Activated CD8-positive, alpha-beta T cell treated with anti-CD3 and anti-CD28 coated beads for 36 hours (primary cell): ENCODE measurements at regions of chr20 and their contacts with region 1.

Region 1: GRCh38 chr20:62010551-62011402 is 54.9 kb downstream of the TAF4 start:
- DNase-seq: peak; percentile 73
- ATAC-seq: peak; percentile 83
- H3K4me3 Mint-ChIP-seq: no peak overlapping the region
- H3K27ac Mint-ChIP-seq: no peak overlapping the region
- H3K4me1 Mint-ChIP-seq: peaks cover 9% of the 10 kb centered on the region
- H3K27me3 Mint-ChIP-seq: no peaks in the 10 kb centered on the region
- CTCF ChIP-seq: peak; percentile 88

Region 2: GRCh38 chr20:61861054-61861841 is 149.5 kb before region 1 on chr20:
- CTCF ChIA-PET with region 1: no interaction called
- POLR2A ChIA-PET with region 1: no interaction called
- intact Hi-C with region 1: no loop called
- DNase-seq: peak; percentile 17
- ATAC-seq: no peak
- H3K4me3 Mint-ChIP-seq: no peak overlapping the region
- H3K27ac Mint-ChIP-seq: no peak overlapping the region
- H3K4me1 Mint-ChIP-seq: no peaks in the 10 kb centered on the region
- H3K27me3 Mint-ChIP-seq: peaks cover 7% of the 10 kb centered on the region
- CTCF ChIP-seq: no peak

Region 3: DNA sequence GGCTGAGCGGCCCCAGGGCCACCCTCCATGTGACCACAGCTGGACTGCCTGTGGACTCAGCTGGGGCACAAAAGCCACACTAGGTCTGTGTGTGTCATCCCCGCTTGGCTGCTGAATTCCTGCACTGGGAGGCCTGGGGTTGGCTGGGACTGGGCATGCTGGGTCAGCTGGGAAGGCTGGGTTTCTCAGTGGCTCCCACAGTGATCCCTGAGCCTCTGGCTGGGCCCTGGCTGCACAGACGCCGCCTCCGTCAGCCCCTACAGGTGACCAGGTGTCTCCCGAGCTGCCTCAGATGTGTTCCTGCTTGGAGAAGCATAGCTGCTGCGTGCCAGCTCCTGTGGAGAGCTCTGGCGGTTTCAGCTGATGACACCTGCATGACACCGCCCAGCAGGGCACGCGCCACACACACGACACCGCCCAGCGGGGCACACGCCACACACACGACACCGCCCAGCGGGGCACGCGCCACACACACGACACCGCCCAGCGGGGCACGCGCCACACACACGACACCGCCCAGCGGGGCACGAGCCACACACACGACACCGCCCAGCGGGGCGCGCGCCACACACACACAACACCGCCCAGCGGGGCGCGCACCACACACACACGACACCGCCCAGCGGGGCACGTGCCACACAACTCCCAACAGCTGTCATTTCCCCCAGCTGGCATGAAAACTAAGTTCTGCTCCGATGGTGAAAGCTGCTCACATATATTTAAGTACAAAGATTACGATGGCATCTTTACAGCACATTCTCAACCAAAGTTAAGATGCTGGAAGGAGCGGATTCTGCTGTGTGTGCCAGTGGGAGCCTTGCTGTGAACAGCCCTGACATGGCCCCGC is 33.9 kb before region 1 on chr20:
- CTCF ChIA-PET with region 1: no interaction called
- POLR2A ChIA-PET with region 1: no interaction called
- intact Hi-C with region 1: no loop called
- DNase-seq: no peak
- ATAC-seq: no peak
- H3K4me3 Mint-ChIP-seq: no peak overlapping the region
- H3K27ac Mint-ChIP-seq: no peak overlapping the region
- H3K4me1 Mint-ChIP-seq: peaks cover 9% of the 10 kb centered on the region
- H3K27me3 Mint-ChIP-seq: no peaks in the 10 kb centered on the region
- CTCF ChIP-seq: no peak

Region 4: DNA sequence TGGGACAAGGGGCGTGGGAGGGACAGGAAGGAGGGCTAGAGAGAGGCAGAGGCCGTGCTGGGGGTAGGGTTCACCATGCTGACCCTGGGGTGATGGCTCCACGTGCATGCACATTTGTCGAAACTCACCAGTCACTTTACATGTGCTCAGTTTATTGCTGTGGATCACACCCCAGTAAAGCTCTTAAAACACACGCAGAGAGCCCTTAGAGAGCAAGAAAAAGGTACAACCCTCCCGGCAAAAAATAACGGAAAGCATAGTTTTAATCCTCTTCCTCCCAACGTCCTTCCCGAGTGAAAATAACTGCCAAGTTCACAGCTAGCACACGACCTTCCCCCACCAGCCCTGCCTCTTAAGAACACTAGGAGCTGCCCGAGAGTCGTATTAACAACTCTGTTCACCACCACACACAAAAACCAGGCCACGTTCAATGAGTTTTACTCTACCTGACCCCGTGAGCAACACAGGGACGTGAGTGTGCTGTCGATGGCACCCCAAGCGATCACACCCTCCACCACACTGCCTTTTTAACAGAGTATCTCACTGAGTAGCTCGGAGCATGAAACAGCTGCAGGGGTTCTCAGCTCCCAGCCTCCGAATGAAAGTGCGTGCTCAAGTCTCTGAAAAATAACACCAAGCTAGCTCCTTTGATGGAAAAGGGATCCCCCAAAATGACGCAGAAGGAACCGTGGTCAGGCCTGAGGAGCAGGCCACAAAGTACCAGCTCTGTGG is 15.2 kb after region 1 on chr20:
- CTCF ChIA-PET with region 1: interaction called, 13 read pairs
- POLR2A ChIA-PET with region 1: no interaction called
- intact Hi-C with region 1: no loop called
- DNase-seq: peak; percentile 48
- ATAC-seq: peak; percentile 85
- H3K4me3 Mint-ChIP-seq: no peak overlapping the region
- H3K27ac Mint-ChIP-seq: peak overlapping the region; percentile 14
- H3K4me1 Mint-ChIP-seq: peaks cover 37% of the 10 kb centered on the region
- H3K27me3 Mint-ChIP-seq: no peaks in the 10 kb centered on the region
- CTCF ChIP-seq: peak; percentile 33

Region 5: DNA sequence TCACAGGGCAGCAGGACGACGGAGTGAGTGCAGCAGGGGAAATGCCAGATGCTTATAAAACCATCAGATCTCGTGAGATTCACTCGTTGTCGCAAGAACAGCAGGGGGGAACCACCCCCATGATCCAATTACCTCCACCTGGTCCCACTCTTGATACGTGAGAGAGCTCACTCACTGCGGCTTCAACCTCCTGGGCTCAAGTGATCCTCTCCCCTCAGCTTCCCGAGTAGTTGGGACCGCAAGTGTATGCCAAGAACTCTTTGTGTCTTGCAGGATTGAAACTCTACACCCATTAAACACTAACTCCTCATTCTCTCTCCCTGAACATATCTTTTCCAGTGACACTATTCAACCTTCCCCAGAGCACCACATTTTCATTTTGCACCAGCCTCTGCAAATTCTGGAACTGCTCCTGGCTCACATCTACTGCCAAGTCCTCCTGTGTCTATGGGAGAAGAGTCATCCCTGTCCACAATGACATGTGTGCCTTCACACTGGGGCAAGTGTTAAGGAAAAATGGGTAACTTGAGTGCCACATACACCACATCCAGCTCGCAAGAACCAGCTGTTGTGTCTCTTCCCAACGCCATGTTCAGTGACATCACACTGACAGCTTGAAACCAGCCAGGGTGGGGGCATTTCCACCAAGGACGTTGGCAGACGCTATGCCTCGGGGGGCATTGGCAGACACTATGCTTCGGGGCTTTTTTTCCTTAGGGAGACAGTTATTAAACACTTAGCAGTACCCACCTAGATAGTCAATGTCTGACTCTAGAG is 69.7 kb after region 1 on chr20:
- CTCF ChIA-PET with region 1: no interaction called
- POLR2A ChIA-PET with region 1: no interaction called
- intact Hi-C with region 1: no loop called
- DNase-seq: no peak
- ATAC-seq: no peak
- H3K4me3 Mint-ChIP-seq: no peak overlapping the region
- H3K27ac Mint-ChIP-seq: no peak overlapping the region
- H3K4me1 Mint-ChIP-seq: no peaks in the 10 kb centered on the region
- H3K27me3 Mint-ChIP-seq: no peaks in the 10 kb centered on the region
- CTCF ChIP-seq: no peak

Region 6: DNA sequence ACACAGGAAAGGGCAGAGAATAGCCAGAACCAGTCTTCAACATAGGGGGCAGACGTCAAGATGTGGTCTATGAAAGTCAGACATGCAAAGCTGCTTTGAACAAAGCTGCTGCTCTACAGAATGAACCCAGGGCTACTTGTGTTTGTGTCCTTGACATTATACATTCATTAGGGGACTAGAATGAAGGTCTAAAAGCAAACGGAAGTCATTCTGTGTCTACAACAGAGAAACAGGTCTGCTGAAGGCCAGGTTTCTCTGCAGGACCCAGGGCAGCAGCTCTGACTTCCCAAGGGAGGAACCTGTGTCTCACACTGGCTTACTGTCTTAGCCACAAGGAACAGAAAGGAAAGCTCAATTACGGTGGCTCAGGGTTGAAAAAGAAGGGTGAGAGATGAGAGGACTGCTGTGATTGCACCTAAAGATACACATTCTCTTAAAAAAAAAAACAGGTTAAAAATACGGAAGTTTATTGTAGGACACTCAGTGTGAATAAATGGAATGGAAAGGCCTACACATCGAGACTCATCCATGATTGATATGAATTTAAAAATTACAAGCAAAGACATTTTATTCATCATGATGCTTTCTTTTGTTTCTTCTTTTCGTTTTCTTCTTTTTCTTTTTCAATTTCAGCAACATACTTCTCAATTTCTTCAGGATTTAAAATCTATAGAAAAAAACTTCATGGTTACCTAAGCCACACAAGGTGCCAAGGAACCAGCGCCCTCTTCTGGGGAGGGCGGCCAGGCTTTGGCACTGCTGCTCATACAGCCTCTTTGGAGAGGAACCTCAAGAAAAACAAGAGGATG is 125.7 kb after region 1 on chr20:
- CTCF ChIA-PET with region 1: interaction called, 27 read pairs
- POLR2A ChIA-PET with region 1: interaction called, 3 read pairs
- intact Hi-C with region 1: no loop called
- DNase-seq: peak; percentile 84
- ATAC-seq: peak; percentile 63
- H3K4me3 Mint-ChIP-seq: no peak overlapping the region
- H3K27ac Mint-ChIP-seq: peak overlapping the region; percentile 64
- H3K4me1 Mint-ChIP-seq: peaks cover 47% of the 10 kb centered on the region
- H3K27me3 Mint-ChIP-seq: no peaks in the 10 kb centered on the region
- CTCF ChIP-seq: peak; percentile 87

Region 7: DNA sequence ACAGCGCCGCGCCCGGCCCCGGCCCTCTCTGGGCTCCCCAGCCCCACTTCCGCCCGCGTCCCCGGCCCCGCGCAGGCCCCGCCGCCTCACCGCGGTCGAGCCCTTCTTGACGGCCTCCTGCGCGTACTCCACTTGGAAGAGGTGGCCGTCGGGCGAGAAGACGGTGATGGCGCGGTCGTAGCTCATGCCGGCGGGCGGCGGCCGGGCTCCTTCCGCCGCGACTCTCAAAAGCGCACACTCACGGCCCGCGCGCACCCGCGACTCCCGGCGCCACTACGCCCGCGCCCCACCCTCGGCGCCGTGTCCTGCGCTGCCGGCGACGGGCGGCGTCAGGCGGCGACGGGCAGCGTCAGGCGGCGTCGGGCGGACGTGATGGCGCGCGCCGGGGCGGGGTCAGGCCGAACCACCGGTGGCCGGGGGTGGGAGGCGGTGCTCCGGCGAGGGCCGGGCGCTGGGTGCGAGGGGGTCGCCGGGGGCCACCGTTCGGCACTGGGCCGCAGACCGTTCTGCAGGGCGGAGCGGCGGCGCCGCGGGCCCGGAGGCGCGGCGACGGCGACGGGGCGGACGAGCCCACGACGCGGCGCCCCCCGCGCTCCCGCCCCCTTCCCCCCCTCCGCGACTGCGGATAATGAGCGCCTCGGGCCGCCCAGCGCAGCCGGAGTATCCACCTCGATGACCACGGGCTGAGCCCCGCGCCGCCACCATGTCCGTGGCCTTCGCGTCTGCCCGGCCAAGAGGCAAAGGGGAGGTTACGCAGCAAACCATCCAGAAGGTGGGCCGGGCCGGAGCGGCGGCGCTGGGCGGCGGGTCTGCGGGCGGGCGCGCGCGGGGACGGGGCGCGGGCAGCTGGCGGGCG is 132.6 kb after region 1 on chr20 and contains the starts of genes PSMA7 and SS18L1:
- CTCF ChIA-PET with region 1: interaction called, 19 read pairs
- POLR2A ChIA-PET with region 1: interaction called, 3 read pairs
- intact Hi-C with region 1: no loop called
- DNase-seq: peak; percentile 85
- ATAC-seq: peak; percentile 90
- H3K4me3 Mint-ChIP-seq: peak within 1 kb of the TSS; percentile 84
- H3K27ac Mint-ChIP-seq: peak within 1 kb of the TSS; percentile 89
- H3K4me1 Mint-ChIP-seq: peaks cover 47% of the 10 kb centered on the region
- H3K27me3 Mint-ChIP-seq: no peaks in the 10 kb centered on the region
- CTCF ChIP-seq: no peak
- total RNA-seq, gene PSMA7: 286 to 289 TPM
- total RNA-seq, gene SS18L1: 15.3 to 16.1 TPM